Sigmoid colon (tissue), 7 donors: ENCODE measurements at regions of chr9 and their contacts with region 1.

Region 1: GRCh38 chr9:114108016-114108833 is 9.1 kb upstream of the KIF12 start:
- DNase-seq: peak; percentile 86
- H3K4me3 ChIP-seq: no peak overlapping the region
- H3K27ac ChIP-seq: no peak overlapping the region
- H3K4me1 ChIP-seq: peaks cover 0 to 7% (median 3%) of the 10 kb centered on the region in 4 donors
- H3K27me3 ChIP-seq: no peaks in the 10 kb centered on the region
- CTCF ChIP-seq: peak; percentile 73 to 91 (median 80)
- EP300 ChIP-seq: no peak
- POLR2A ChIP-seq: no peak

Region 2: DNA sequence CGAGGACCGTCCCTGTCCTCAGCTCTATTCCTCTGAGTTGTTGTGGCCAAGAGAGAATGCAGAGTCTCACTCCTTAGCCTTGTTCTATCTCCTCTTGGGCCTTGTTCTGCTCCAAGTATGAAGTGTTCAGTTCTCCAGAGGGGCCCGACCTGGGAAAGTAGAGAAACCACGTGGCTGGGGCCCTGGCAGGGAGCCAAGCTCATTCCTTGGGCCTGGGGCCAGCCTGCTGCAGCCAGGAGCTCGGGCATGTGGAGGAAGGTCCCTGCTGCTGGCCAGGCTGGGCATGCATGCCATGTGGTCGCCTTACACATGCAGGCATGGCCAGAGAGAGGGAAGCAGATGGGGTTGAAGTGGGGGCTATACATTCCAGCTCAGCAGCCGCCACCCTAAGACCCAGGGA is 107.9 kb after region 1 on chr9:
- intact Hi-C with region 1: no loop called
- DNase-seq: no peak
- H3K4me3 ChIP-seq: no peak overlapping the region
- H3K27ac ChIP-seq: peak overlapping the region in 2 of 4 donors; percentile 20 to 52
- H3K4me1 ChIP-seq: peaks cover 0 to 34% (median 25%) of the 10 kb centered on the region in 4 donors
- H3K27me3 ChIP-seq: no peaks in the 10 kb centered on the region
- CTCF ChIP-seq: no peak
- EP300 ChIP-seq: no peak
- POLR2A ChIP-seq: no peak

Region 3: GRCh38 chr9:114271641-114272081 is 163.4 kb after region 1 on chr9:
- intact Hi-C with region 1: loop called (anchors 5 kb)
- DNase-seq: peak; percentile 75
- H3K4me3 ChIP-seq: no peak overlapping the region
- H3K27ac ChIP-seq: no peak overlapping the region
- H3K4me1 ChIP-seq: no peaks in the 10 kb centered on the region
- H3K27me3 ChIP-seq: no peaks in the 10 kb centered on the region
- CTCF ChIP-seq: peak; percentile 16 to 64 (median 54)
- EP300 ChIP-seq: no peak
- POLR2A ChIP-seq: no peak

Region 4: DNA sequence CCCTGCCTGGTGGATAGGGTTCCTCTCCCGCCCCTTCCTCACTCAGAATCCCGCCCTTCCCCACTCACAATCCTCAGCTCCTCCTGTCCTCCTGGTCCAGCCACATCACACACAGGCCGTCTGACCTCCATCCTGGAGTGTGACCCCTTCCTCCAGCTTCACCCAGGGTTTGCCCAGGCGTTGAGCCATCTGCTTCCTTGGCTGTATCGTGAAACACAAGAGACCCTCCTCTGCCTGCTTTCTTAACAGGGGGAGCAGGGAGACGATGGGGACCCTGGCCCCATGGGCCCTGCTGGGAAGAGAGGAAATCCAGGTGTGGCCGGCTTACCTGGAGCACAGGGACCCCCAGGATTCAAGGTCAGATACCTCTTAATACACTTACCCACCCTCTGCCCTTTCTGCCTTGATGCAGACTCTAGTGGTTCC is 182.3 kb after region 1 on chr9:
- intact Hi-C with region 1: loop called (anchors 1 kb)
- DNase-seq: peak; percentile 40
- H3K4me3 ChIP-seq: no peak overlapping the region
- H3K27ac ChIP-seq: no peak overlapping the region
- H3K4me1 ChIP-seq: peaks cover 0 to 12% (median 3%) of the 10 kb centered on the region in 4 donors
- H3K27me3 ChIP-seq: no peaks in the 10 kb centered on the region
- CTCF ChIP-seq: no peak
- EP300 ChIP-seq: no peak
- POLR2A ChIP-seq: no peak